ENCODE measurements at regions of chr12 and their contacts with region 1.

Region 1: GRCh38 chr12:18861287-18861858 is 123.5 kb downstream of the CAPZA3 start:
- DNase-seq: peak; percentile 29
- ATAC-seq: no peak
- H3K4me3 ChIP-seq: no peak overlapping the region
- H3K27ac ChIP-seq: no peak overlapping the region
- H3K4me1 ChIP-seq: no peaks in the 10 kb centered on the region
- H3K27me3 ChIP-seq: no peaks in the 10 kb centered on the region
- CTCF ChIP-seq: peak; percentile 49
- EP300 ChIP-seq: no peak
- POLR2A ChIP-seq: no peak
- RAD21 ChIP-seq: no peak

Region 2: DNA sequence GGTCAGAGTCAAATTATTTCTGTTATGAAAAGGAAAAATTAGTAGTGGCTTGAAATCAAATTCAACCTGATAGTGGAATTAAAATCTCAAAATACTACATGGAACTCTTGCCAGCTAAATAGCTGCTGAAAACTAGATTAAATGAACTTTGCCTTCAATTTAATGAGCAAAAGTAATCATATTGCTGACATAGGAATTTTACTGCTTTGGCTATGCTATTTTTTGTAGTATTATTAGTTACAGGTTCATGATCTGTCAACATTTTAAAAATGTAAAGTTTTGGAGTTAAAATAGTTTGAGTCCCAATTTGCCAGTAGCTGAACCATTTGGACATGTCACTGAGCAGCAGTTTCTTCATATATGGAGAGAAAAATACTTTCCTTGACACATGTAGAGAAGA is 852.7 kb before region 1 on chr12:
- CTCF ChIA-PET with region 1: no interaction called
- POLR2A ChIA-PET with region 1: no interaction called
- in situ Hi-C with region 1: no loop called
- intact Hi-C with region 1: no loop called
- DNase-seq: no peak
- ATAC-seq: no peak
- H3K4me3 ChIP-seq: no peak overlapping the region
- H3K27ac ChIP-seq: no peak overlapping the region
- H3K4me1 ChIP-seq: no peaks in the 10 kb centered on the region
- H3K27me3 ChIP-seq: no peaks in the 10 kb centered on the region
- CTCF ChIP-seq: no peak
- EP300 ChIP-seq: no peak
- POLR2A ChIP-seq: no peak
- RAD21 ChIP-seq: no peak

Region 3: DNA sequence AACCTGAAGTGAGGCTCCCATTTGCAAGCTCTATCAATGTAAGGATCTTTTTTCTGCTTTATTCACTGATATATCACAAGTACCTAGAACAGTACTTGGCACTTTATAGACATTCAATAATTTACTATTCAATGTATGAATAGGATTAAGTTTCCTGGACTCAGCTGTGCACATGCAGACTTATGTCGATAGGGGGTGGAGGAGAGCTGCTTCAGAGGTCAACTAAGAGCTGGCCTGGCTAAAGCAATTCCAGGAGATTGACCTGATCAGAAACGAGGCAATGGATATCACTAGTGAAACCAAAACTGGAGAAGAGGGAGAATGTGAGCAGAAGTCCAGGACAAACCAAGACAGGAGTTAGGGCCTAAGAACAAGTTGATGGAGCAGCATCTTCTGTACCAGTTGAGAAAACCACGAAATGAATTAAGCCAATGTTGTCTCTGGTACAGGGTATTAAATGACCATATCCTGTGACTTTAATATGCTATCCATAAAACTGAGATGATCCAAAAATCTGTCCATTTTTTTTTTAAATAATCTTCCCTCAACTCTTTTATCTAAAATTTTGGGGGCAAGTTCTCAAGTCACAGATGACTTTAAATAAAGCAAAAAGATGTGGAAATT is 430.8 kb before region 1 on chr12:
- CTCF ChIA-PET with region 1: no interaction called
- POLR2A ChIA-PET with region 1: no interaction called
- in situ Hi-C with region 1: no loop called
- intact Hi-C with region 1: loop called (anchors 10 kb)
- DNase-seq: peak; percentile 24
- ATAC-seq: peak; percentile 93
- H3K4me3 ChIP-seq: no peak overlapping the region
- H3K27ac ChIP-seq: no peak overlapping the region
- H3K4me1 ChIP-seq: no peaks in the 10 kb centered on the region
- H3K27me3 ChIP-seq: no peaks in the 10 kb centered on the region
- CTCF ChIP-seq: peak; percentile 74
- EP300 ChIP-seq: no peak
- POLR2A ChIP-seq: no peak
- RAD21 ChIP-seq: no peak

Region 4: DNA sequence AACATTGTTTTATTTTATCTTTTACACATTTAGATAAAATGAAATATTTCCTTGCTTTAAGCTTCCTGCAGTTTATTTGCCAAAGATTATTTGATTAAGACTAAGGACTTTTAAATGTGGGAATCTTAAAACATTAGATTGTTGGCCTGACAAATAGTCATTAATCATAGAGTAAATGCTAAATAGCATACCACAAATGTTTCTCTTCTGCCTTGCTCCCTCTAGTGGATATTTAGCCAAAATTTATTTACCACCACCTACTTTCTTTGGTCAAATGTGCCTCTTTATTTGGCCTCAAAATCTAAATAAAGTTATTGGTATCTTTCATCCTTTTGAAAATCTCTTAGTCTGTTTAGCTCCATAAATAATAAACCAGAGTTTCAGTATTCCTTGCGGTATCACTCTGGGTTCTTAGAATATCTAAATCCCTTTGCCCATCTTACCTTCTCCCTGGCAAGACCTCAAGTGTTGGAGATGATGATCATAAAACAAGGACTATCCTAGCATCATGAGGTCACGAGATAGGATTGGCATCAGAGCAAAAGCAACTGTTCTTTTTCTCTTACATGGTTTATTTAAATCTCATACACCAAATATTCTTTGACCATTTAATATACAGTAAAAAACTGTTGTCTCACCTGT is 427.4 kb after region 1 on chr12:
- CTCF ChIA-PET with region 1: interaction called, 5 read pairs
- POLR2A ChIA-PET with region 1: no interaction called
- in situ Hi-C with region 1: no loop called
- intact Hi-C with region 1: loop called (anchors 1 kb)
- DNase-seq: peak; percentile 32
- ATAC-seq: peak; percentile 61; the same call in 2 of the 3 replicates
- H3K4me3 ChIP-seq: no peak overlapping the region
- H3K27ac ChIP-seq: no peak overlapping the region
- H3K4me1 ChIP-seq: peaks cover 7% of the 10 kb centered on the region
- H3K27me3 ChIP-seq: no peaks in the 10 kb centered on the region
- CTCF ChIP-seq: peak; percentile 54
- EP300 ChIP-seq: no peak
- POLR2A ChIP-seq: no peak
- RAD21 ChIP-seq: no peak

Region 5: DNA sequence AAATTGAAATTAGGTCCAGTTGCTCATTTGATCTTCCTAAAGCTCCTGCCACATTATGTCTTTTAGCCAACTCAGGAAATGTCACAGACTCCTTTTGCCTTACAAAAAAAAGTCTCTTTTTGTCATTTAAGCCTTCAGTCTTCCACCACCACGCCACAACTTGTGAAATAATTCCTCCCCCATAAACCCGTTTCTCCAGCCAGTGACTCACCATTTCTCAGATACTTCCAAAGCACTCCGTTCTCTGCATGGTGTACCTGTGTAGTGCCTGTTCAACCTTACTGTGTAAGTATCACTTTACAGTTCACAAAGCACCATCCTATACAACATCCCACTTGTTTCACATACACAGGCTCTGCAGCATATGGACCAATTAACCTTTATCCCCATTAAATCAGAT is 438.4 kb after region 1 on chr12:
- CTCF ChIA-PET with region 1: no interaction called
- POLR2A ChIA-PET with region 1: no interaction called
- in situ Hi-C with region 1: loop called (anchors 25 kb)
- intact Hi-C with region 1: no loop called
- DNase-seq: no peak
- ATAC-seq: no peak
- H3K4me3 ChIP-seq: no peak overlapping the region
- H3K27ac ChIP-seq: no peak overlapping the region
- H3K4me1 ChIP-seq: no peaks in the 10 kb centered on the region
- H3K27me3 ChIP-seq: no peaks in the 10 kb centered on the region
- CTCF ChIP-seq: no peak
- EP300 ChIP-seq: no peak
- POLR2A ChIP-seq: no peak
- RAD21 ChIP-seq: no peak